Left cardiac atrium (tissue), 4 donors: ENCODE measurements at regions of chr22 and their contacts with region 1.

Region 1: GRCh38 chr22:49026494-49027380 is 800.9 kb downstream of the BRD1 start:
- DNase-seq: no peak
- ATAC-seq: no peak

Region 2: GRCh38 chr22:48943567-48944432 is 82.9 kb before region 1 on chr22:
- intact Hi-C with region 1: loop called in 1 of 2 experiments (anchors 10 kb)
- DNase-seq: peak; percentile 51
- ATAC-seq: peak in 1 of 2 donors; percentile 62